Posterior vena cava (tissue), 2 donors: ENCODE measurements at regions of chr5 and their contacts with region 1.

Region 1: GRCh38 chr5:172315587-172316493 is 32.3 kb upstream of the UBTD2 start:
- DNase-seq: no peak

Region 2: GRCh38 chr5:170327168-170327567 is 1988.7 kb before region 1 on chr5:
- intact Hi-C with region 1: loop called in 1 of 2 experiments (anchors 10 kb)
- DNase-seq: no peak

Region 3: GRCh38 chr5:172347496-172348052 is 31.7 kb after region 1 on chr5:
- intact Hi-C with region 1: no loop called
- DNase-seq: peak; percentile 44